A549 (cell line): ENCODE measurements at regions of chr1 and their contacts with region 1.

Region 1: GRCh38 chr1:110053557-110054428 is 16.7 kb downstream of the ALX3 start:
- DNase-seq: peak; percentile 40 to 49
- ATAC-seq: peak; percentile 82 to 93; a peak in 5 of 6 replicates
- H3K4me3 ChIP-seq: no peak overlapping the region
- H3K27ac ChIP-seq: no peak overlapping the region
- H3K4me1 ChIP-seq: no peaks in the 10 kb centered on the region
- CTCF ChIP-seq: peak; percentile 73
- EP300 ChIP-seq: no peak
- POLR2A ChIP-seq: no peak
- RAD21 ChIP-seq: peak; percentile 51 to 63

Region 2: DNA sequence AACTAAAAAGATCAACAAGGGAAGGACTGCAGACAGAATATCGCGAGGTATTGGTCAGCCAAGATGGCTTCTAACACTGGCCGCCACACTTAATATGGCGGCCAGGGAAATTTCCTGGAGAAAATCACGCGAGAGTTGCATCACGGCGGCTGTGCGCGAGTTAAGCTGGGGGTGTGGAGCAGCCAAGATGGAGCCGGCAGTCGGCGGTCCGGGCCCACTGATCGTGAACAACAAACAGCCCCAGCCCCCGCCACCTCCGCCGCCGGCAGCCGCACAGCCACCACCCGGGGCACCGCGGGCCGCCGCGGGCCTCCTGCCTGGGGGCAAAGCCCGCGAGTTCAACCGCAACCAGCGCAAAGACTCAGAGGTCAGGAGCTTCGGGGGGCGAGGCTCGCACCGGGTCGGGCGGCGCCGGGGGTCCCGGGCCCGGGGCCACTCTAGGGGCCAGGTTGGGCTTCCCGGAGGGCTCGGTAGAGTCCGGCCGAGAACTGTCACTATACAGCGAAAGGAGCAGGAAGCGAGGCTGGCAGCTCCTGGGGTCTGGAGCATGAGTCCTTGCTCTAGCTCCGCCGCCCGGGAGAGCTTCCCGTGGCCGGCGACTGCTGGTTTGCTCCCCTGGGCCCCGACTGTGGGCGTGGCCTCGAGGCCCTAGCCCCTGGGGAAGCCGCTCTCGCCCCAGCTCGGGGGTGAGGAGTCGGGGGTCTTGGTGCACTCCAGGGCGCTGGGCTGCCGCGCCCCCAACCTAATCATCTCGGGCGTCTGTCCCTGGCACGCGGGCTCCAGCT is 19.1 kb before region 1 on chr1 and contains the start of gene STRIP1:
- CTCF ChIA-PET with region 1: interaction called, 22 read pairs
- POLR2A ChIA-PET with region 1: interaction called, 3 read pairs
- DNase-seq: peak; percentile 80 to 94
- ATAC-seq: peak; percentile 88 to 92
- H3K4me3 ChIP-seq: peak within 1 kb of the TSS; percentile 89
- H3K27ac ChIP-seq: peak within 1 kb of the TSS; percentile 93 to 99
- H3K4me1 ChIP-seq: peaks cover 12% of the 10 kb centered on the region; the same call in 2 of the 3 replicates
- CTCF ChIP-seq: no peak
- EP300 ChIP-seq: no peak
- POLR2A ChIP-seq: peak; percentile 61
- RAD21 ChIP-seq: no peak
- polyA plus RNA-seq, gene STRIP1: 16.4 and 20.2 TPM in 2 replicates

Region 3: GRCh38 chr1:110040548-110040947 is 13.2 kb before region 1 on chr1:
- CTCF ChIA-PET with region 1: interaction called, 130 read pairs
- POLR2A ChIA-PET with region 1: no interaction called
- DNase-seq: no peak
- ATAC-seq: no peak
- H3K4me3 ChIP-seq: no peak overlapping the region
- H3K27ac ChIP-seq: no peak overlapping the region
- H3K4me1 ChIP-seq: peaks cover 8% of the 10 kb centered on the region; the same call in 2 of the 3 replicates
- CTCF ChIP-seq: no peak
- EP300 ChIP-seq: no peak
- POLR2A ChIP-seq: no peak
- RAD21 ChIP-seq: no peak

Region 4: GRCh38 chr1:110087812-110088738 is 34.3 kb after region 1 on chr1:
- CTCF ChIA-PET with region 1: interaction called, 18 read pairs
- POLR2A ChIA-PET with region 1: no interaction called
- DNase-seq: peak; percentile 35 to 64
- ATAC-seq: peak; percentile 90 to 97
- H3K4me3 ChIP-seq: no peak overlapping the region
- H3K27ac ChIP-seq: no peak overlapping the region
- H3K4me1 ChIP-seq: no peaks in the 10 kb centered on the region
- CTCF ChIP-seq: peak; percentile 42; the same call in 1 of the 3 replicates
- EP300 ChIP-seq: no peak
- POLR2A ChIP-seq: no peak
- RAD21 ChIP-seq: peak; percentile 30 to 52; a peak in 3 of 5 replicates

Region 5: DNA sequence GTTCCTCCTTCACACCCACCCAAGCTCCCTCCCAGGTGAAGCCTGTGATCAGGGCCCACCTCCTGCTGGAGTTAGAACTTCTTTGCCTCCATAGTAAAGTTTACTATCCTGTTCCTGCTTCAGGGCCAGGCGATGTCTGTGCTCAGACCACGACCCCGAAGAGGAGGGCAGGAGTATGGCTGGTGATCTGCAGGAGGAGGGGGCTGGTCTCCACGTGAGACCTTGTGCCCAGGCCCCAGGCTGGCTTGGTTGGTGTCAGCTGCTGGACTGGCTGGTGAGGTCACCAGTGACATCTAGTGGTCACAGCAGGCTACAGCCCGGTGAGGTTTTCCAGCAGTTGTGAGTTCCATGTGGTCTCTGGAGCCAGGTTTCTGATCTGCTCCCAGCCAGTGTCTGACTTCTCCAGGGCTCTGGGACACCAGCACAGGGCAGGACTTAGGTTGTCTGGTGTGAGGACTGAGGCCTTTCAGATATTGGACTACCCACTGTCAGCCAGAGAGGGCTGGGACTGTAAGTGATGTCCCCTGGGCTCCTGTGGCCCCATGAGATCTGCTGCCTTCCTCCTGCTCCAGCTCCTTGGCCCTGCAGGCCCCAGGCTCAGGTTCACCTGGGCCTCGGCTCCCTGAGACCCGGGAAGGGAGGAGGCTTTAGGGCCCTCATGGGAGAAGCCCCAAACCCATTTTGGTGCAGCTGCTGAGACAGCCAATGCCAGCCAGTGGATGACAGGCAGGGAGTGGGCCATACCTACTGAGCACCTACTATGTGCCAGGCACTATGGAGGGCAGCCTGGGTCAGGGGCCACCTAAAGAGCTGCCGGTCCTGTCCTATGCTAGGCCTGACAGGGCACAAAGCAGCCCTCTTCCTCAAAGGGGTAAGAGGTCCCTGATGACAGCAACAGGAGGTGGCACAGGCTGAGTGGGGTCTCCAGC is 52.5 kb after region 1 on chr1:
- CTCF ChIA-PET with region 1: interaction called, 93 read pairs
- POLR2A ChIA-PET with region 1: no interaction called
- DNase-seq: peak; percentile 60 to 75
- ATAC-seq: peak; percentile 83 to 97
- H3K4me3 ChIP-seq: no peak overlapping the region
- H3K27ac ChIP-seq: peak overlapping the region in 1 of 2 experiments; percentile 64; a peak in 1 of 6 replicates
- H3K4me1 ChIP-seq: no peaks in the 10 kb centered on the region
- CTCF ChIP-seq: peak; percentile 67
- EP300 ChIP-seq: no peak
- POLR2A ChIP-seq: no peak
- RAD21 ChIP-seq: peak; percentile 60 to 75; a peak in 4 of 5 replicates

Region 6: GRCh38 chr1:110262846-110263631 is 209.2 kb after region 1 on chr1:
- CTCF ChIA-PET with region 1: no interaction called
- POLR2A ChIA-PET with region 1: no interaction called
- DNase-seq: no peak
- ATAC-seq: no peak
- H3K4me3 ChIP-seq: no peak overlapping the region
- H3K27ac ChIP-seq: no peak overlapping the region
- H3K4me1 ChIP-seq: no peaks in the 10 kb centered on the region
- CTCF ChIP-seq: no peak
- EP300 ChIP-seq: no peak
- POLR2A ChIP-seq: no peak
- RAD21 ChIP-seq: no peak